ENCODE measurements at regions of chr7 and their contacts with region 1.

Region 1: GRCh38 chr7:75546237-75547015 is 54.3 kb downstream of the SPDYE5 start:
- DNase-seq: no peak
- ATAC-seq: no peak
- H3K4me3 Mint-ChIP-seq: no peak overlapping the region
- H3K27ac Mint-ChIP-seq: no peak overlapping the region
- H3K4me1 Mint-ChIP-seq: no peaks in the 10 kb centered on the region
- H3K27me3 Mint-ChIP-seq: no peaks in the 10 kb centered on the region

Region 2: GRCh38 chr7:75584354-75584753 is 37.9 kb after region 1 on chr7:
- CTCF ChIA-PET with region 1: no interaction called
- POLR2A ChIA-PET with region 1: interaction called, 11 read pairs
- intact Hi-C with region 1: no loop called
- DNase-seq: no peak
- ATAC-seq: no peak
- H3K4me3 Mint-ChIP-seq: no peak overlapping the region
- H3K27ac Mint-ChIP-seq: no peak overlapping the region
- H3K4me1 Mint-ChIP-seq: no peaks in the 10 kb centered on the region
- H3K27me3 Mint-ChIP-seq: no peaks in the 10 kb centered on the region